Right lobe of liver (tissue), 6 donors: ENCODE measurements at regions of chr15 and their contacts with region 1.

Region 1: GRCh38 chr15:33963831-33964664 is 4.2 kb upstream of the CHRM5 start:
- DNase-seq: no peak
- ATAC-seq: peak; percentile 66 to 77 (median 70)
- H3K4me3 ChIP-seq: no peak overlapping the region
- H3K27ac ChIP-seq: no peak overlapping the region
- H3K4me1 ChIP-seq: no peaks in the 10 kb centered on the region
- H3K27me3 ChIP-seq: no peaks in the 10 kb centered on the region
- CTCF ChIP-seq: peak; percentile 56 to 63 (median 58)
- POLR2A ChIP-seq: no peak

Region 2: GRCh38 chr15:33742800-33743199 is 221.2 kb before region 1 on chr15:
- intact Hi-C with region 1: loop called in 1 of 2 experiments (anchors 10 kb)
- DNase-seq: no peak
- ATAC-seq: no peak
- H3K4me3 ChIP-seq: no peak overlapping the region
- H3K27ac ChIP-seq: no peak overlapping the region
- H3K4me1 ChIP-seq: no peaks in the 10 kb centered on the region
- H3K27me3 ChIP-seq: no peaks in the 10 kb centered on the region
- CTCF ChIP-seq: no peak
- POLR2A ChIP-seq: no peak